Natural killer cell (primary cell): ENCODE measurements at regions of chr5 and their contacts with region 1.

Region 1: DNA sequence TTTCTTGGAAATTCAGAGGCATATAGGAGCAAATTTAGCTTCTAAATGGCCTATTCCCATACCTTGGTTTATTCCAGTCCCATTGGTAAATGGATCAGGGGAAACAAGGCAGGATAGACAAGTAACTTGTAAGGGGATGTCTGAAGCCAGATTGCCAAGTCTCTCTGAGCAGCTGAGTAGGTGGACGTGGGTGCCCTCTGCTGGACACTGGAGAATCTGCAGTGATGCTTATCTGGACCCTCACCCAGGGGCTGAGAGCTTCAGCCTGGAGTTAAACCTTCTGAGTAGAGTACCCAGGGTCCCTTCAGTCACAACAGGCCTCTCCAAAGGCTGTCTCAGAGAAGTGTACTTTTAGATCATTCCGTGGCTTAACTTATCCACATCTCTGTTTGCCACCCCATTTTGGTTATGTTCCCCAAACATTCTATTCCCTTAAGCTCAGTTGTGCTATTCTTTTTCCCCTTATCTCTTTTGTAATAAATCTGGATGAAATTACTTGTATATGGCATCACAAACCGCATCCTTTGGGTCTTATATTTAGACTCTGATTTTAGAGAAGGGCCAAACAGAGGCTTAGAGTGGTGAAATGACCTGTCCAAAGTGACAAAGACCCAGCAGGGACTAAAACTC is 218.3 kb upstream of the GLRA1 start:
- DNase-seq: peak; percentile 51 to 82
- ATAC-seq: peak; percentile 76 to 86 (median 83)
- H3K4me3 ChIP-seq: no peak overlapping the region
- H3K4me3 Mint-ChIP-seq: no peak overlapping the region
- H3K27ac ChIP-seq: no peak overlapping the region
- H3K27ac Mint-ChIP-seq: no peak overlapping the region
- H3K4me1 ChIP-seq: no peaks in the 10 kb centered on the region
- H3K4me1 Mint-ChIP-seq: no peaks in the 10 kb centered on the region
- H3K27me3 ChIP-seq: no peaks in the 10 kb centered on the region
- H3K27me3 Mint-ChIP-seq: peaks cover 3 to 6% of the 10 kb centered on the region in 2 donors
- CTCF ChIP-seq: peak; percentile 91

Region 2: GRCh38 chr5:151628112-151628823 is 514.7 kb before region 1 on chr5:
- intact Hi-C with region 1: no loop called
- DNase-seq: no peak
- ATAC-seq: no peak
- H3K4me3 ChIP-seq: no peak overlapping the region
- H3K4me3 Mint-ChIP-seq: no peak overlapping the region
- H3K27ac ChIP-seq: no peak overlapping the region
- H3K27ac Mint-ChIP-seq: no peak overlapping the region
- H3K4me1 ChIP-seq: no peaks in the 10 kb centered on the region
- H3K4me1 Mint-ChIP-seq: no peaks in the 10 kb centered on the region
- H3K27me3 ChIP-seq: no peaks in the 10 kb centered on the region
- H3K27me3 Mint-ChIP-seq: peaks cover 0 to 8% of the 10 kb centered on the region in 2 donors
- CTCF ChIP-seq: no peak

Region 3: GRCh38 chr5:151659001-151659754 is 483.8 kb before region 1 on chr5:
- intact Hi-C with region 1: loop called (anchors 1 kb)
- DNase-seq: peak; percentile 81 to 89
- ATAC-seq: peak; percentile 92 to 100 (median 100)
- H3K4me3 ChIP-seq: no peak overlapping the region
- H3K4me3 Mint-ChIP-seq: no peak overlapping the region
- H3K27ac ChIP-seq: no peak overlapping the region
- H3K27ac Mint-ChIP-seq: no peak overlapping the region
- H3K4me1 ChIP-seq: peaks cover 11% of the 10 kb centered on the region
- H3K4me1 Mint-ChIP-seq: peaks cover 11 to 16% of the 10 kb centered on the region in 2 donors
- H3K27me3 ChIP-seq: peaks cover 3% of the 10 kb centered on the region
- H3K27me3 Mint-ChIP-seq: peaks cover 0 to 6% of the 10 kb centered on the region in 2 donors
- CTCF ChIP-seq: peak; percentile 85

Region 4: GRCh38 chr5:151825445-151825844 is 317.5 kb before region 1 on chr5:
- intact Hi-C with region 1: loop called (anchors 1 kb)
- DNase-seq: peak in 1 of 2 donors; percentile 70
- ATAC-seq: peak in 2 of 3 donors; percentile 47 to 60
- H3K4me3 ChIP-seq: no peak overlapping the region
- H3K4me3 Mint-ChIP-seq: no peak overlapping the region
- H3K27ac ChIP-seq: no peak overlapping the region
- H3K27ac Mint-ChIP-seq: no peak overlapping the region
- H3K4me1 ChIP-seq: no peaks in the 10 kb centered on the region
- H3K4me1 Mint-ChIP-seq: peaks cover 5 to 7% of the 10 kb centered on the region in 2 donors
- H3K27me3 ChIP-seq: no peaks in the 10 kb centered on the region
- H3K27me3 Mint-ChIP-seq: no peaks in the 10 kb centered on the region
- CTCF ChIP-seq: peak; percentile 75

Region 5: DNA sequence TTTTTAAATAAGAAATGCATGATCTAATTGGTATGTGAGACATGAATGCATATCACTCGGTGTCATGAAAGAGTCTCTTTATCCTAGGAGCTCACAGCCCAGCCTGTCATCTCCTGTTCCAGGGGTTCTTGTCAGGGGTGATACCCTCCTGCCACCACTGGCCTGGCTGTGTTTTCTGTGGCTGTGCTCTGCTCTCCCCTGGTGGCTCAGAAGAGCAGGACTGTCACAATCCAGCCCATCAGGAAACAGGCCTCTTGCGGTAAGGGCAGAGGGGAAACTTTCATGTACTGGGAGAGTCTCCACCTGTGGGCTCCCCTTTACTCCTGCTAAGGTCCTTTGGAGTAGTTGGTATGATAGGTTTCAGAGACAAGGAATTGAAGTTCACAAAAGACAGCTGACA is 21.9 kb after region 1 on chr5:
- intact Hi-C with region 1: no loop called
- DNase-seq: no peak
- ATAC-seq: no peak
- H3K4me3 ChIP-seq: no peak overlapping the region
- H3K4me3 Mint-ChIP-seq: no peak overlapping the region
- H3K27ac ChIP-seq: no peak overlapping the region
- H3K27ac Mint-ChIP-seq: no peak overlapping the region
- H3K4me1 ChIP-seq: peaks cover 7% of the 10 kb centered on the region
- H3K4me1 Mint-ChIP-seq: no peaks in the 10 kb centered on the region
- H3K27me3 ChIP-seq: no peaks in the 10 kb centered on the region
- H3K27me3 Mint-ChIP-seq: no peaks in the 10 kb centered on the region
- CTCF ChIP-seq: no peak

Region 6: GRCh38 chr5:152205804-152206203 is 62.8 kb after region 1 on chr5:
- intact Hi-C with region 1: no loop called
- DNase-seq: no peak
- ATAC-seq: no peak
- H3K4me3 ChIP-seq: no peak overlapping the region
- H3K4me3 Mint-ChIP-seq: no peak overlapping the region
- H3K27ac ChIP-seq: no peak overlapping the region
- H3K27ac Mint-ChIP-seq: no peak overlapping the region
- H3K4me1 ChIP-seq: no peaks in the 10 kb centered on the region
- H3K4me1 Mint-ChIP-seq: no peaks in the 10 kb centered on the region
- H3K27me3 ChIP-seq: no peaks in the 10 kb centered on the region
- H3K27me3 Mint-ChIP-seq: no peaks in the 10 kb centered on the region
- CTCF ChIP-seq: no peak

Region 7: GRCh38 chr5:152723482-152723881 is 580.5 kb after region 1 on chr5:
- intact Hi-C with region 1: no loop called
- DNase-seq: no peak
- ATAC-seq: no peak
- H3K4me3 ChIP-seq: no peak overlapping the region
- H3K4me3 Mint-ChIP-seq: no peak overlapping the region
- H3K27ac ChIP-seq: no peak overlapping the region
- H3K27ac Mint-ChIP-seq: no peak overlapping the region
- H3K4me1 ChIP-seq: no peaks in the 10 kb centered on the region
- H3K4me1 Mint-ChIP-seq: no peaks in the 10 kb centered on the region
- H3K27me3 ChIP-seq: no peaks in the 10 kb centered on the region
- H3K27me3 Mint-ChIP-seq: no peaks in the 10 kb centered on the region
- CTCF ChIP-seq: no peak